Activated naive CD4-positive, alpha-beta T cell treated with anti-CD3 and anti-CD28 coated beads for 36 hours (primary cell): ENCODE measurements at regions of chr10 and their contacts with region 1.

Region 1: DNA sequence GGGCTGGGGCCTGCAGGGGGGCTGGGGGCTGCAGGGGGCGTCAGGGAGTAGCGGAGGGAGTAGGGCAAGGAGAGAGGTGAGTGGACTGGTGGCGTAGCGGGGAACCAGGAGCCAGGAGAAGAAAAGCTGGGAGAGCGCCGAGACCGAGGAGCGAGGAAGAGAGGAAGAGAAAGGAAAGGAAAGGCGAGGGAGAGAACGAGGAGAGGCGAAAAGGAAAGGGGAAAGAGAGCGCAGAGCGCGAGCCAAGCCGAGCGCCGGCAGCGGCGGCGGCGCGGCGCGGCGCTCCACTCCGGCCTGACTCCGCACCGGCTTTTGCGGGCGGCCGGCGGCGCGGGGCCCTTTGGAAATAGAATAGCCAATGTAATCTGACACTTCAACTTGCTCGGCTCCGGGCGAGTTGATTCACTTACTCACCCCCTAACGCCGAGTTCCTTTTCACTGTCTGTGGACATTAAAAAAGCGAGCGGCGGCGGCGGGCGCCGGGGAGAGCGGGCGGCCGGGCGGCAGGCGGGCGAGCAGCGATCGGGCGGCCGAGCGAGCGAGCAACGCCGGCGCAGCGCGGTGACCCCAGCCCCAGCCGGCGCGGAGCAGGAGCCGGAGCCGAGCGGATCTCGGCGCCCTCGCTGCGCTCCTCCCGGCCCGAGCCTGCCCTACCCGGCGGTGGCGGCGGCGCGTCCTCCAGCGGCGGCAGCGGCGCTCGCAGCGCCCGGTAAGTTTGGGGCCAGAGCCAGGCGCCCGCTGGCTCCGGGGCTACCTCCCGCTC is at the start of gene ZMIZ1:
- DNase-seq: peak; percentile 85
- H3K4me3 Mint-ChIP-seq: peak within 1 kb of the TSS; percentile 89
- H3K27ac Mint-ChIP-seq: no peak within 1 kb of the TSS
- H3K4me1 Mint-ChIP-seq: peaks cover 27% of the 10 kb centered on the region
- H3K27me3 Mint-ChIP-seq: peaks cover 5% of the 10 kb centered on the region
- total RNA-seq, gene ZMIZ1: 15.6 to 18.3 TPM

Region 2: DNA sequence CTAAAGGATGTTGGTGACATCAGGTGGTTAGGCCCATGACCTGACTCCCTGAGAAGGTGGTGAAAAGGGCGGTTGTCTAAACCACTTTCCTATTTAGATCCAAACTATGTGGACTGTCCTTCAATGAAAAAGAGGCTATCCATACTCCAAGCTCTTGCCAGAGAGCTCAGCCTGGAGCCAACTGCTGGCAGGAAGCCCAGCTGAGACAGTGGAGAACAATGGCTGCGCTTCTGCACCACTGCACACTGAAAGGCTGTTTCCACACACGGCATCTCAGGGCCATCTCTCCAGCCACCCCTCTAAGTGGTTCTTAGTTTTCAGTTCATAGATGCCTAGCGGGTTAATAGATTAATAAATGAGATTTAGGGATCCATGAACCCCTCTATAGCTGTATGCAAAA is 488.7 kb before region 1 on chr10:
- CTCF ChIA-PET with region 1: no interaction called
- intact Hi-C with region 1: loop called (anchors 5 kb)
- DNase-seq: no peak
- H3K4me3 Mint-ChIP-seq: no peak overlapping the region
- H3K27ac Mint-ChIP-seq: no peak overlapping the region
- H3K4me1 Mint-ChIP-seq: peaks cover 15% of the 10 kb centered on the region
- H3K27me3 Mint-ChIP-seq: no peaks in the 10 kb centered on the region

Region 3: DNA sequence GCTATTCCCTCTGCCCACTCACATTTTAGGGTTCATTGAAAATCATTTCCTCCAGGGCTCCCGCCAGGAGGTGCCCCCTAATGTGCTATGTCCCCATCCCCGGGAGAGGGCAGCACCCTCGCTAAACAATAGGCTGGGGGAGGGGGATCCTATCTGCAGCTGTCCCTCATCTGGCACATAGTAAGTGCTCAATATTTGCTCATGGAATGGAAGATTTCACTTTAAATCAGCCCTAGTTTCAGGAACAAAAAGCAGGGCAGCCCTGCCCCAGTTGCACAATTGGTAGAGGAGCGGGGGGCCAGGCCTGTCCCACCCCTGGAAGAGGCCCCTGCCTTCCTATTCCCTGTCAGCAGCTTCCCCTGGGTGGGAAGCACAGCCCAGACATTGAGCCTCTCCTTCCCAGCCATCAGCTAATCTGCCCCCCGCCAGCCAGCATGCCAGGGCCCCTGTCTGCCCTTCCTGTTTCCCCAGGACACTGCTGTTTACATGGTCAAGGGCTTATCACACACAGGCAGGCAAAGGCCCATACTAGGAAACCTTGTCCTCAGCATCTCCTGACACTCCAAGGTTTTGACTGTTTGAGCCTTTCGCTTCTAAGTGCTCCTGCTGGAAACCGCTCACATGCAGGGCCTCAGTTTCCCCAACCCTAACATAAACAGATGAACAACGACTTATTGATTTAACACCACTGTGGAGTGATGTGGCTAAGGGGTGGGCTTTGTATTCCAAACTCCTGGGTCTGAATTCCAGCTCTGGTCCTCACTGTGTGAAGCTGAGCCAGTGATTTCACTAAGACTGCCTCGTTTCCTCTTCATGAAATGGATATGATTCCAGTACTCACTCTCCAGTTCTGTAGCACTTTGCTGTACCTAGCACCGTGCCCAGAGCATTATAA is 130.7 kb before region 1 on chr10:
- CTCF ChIA-PET with region 1: no interaction called
- intact Hi-C with region 1: loop called (anchors 2 kb)
- DNase-seq: peak; percentile 39
- H3K4me3 Mint-ChIP-seq: no peak overlapping the region
- H3K27ac Mint-ChIP-seq: no peak overlapping the region
- H3K4me1 Mint-ChIP-seq: no peaks in the 10 kb centered on the region
- H3K27me3 Mint-ChIP-seq: no peaks in the 10 kb centered on the region

Region 4: DNA sequence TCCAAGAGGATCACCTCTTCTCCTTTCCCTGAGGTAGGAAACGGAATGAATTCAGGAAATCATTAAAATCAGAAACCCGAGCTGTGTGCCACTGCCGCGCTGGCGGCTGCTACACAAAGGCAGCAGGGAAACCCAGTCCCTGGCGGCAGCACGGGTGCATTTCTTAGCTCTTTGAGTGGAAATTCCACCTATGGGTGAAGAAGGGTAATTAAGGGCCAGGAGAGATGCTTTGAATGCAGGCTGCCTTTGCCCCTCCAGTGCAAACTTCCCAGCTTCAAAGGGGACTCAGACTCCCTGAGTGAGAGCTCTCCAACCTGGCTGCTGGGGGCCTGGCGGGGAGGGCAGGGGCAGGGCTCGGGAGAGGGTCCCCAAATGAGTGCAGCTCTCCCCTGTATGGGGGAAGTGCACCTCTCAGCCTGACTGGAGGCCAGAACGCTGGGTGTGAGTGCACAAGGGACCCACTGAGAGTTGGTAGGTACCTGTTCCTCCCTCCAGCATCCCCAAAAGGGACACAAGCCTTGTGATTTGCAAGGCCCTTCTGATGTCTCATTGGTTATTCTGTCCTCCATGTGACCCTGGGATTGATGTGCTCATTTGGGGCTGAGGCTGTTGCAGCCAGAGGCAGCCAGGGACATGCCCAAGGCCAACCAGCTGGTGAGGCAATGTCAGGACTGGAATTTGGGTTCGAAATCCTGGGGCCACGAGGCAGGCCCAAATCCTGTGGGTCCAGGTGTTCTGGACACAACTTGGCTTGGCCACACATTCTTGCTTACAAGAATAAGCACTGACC is 16.3 kb before region 1 on chr10:
- CTCF ChIA-PET with region 1: no interaction called
- intact Hi-C with region 1: loop called (anchors 1 kb)
- DNase-seq: peak; percentile 35
- H3K4me3 Mint-ChIP-seq: no peak overlapping the region
- H3K27ac Mint-ChIP-seq: no peak overlapping the region
- H3K4me1 Mint-ChIP-seq: peaks cover 35% of the 10 kb centered on the region
- H3K27me3 Mint-ChIP-seq: no peaks in the 10 kb centered on the region

Region 5: DNA sequence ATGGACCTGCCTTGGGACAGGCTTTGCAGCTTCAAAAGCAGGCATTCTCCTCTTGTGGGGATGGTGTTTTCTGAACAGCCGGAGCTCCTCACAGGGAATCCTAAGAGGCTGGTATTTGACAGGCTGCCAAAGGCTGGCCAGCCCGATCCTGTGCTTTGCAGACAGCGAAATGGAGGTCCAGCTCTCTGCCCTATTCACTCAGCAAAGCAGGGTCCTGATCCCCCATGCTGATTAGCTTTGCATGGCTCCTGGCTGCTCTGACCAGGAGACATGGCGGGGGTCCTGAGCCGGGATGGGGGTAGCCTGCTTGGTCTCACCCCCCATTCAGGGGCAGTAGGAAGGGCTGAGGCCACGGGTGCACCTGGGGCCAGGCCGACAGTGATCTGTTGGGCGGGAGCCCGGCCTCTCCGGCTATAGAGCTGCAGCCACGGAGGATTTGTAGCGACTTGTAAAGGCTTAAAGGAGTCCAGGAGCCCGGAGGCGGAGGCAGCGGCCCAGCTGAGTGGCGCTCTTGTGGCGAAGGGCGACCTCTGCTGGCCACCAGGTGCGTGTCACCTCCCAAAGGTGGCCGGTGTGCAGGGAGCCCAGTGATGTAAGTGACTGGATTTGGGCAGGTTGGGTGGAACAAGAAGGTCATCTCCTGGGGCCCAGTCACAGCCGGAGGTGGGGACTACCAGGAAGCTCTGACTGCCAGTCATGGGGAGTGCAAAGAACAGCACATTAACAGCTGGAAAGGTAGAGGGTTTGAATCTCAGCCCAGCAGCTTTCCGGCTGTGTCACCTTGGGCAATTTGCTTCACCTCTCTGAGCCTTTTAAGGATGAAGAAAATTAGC is 126.6 kb after region 1 on chr10:
- CTCF ChIA-PET with region 1: interaction called, 9 read pairs
- intact Hi-C with region 1: loop called (anchors 1 kb)
- DNase-seq: peak; percentile 84
- H3K4me3 Mint-ChIP-seq: no peak overlapping the region
- H3K27ac Mint-ChIP-seq: no peak overlapping the region
- H3K4me1 Mint-ChIP-seq: peaks cover 5% of the 10 kb centered on the region
- H3K27me3 Mint-ChIP-seq: no peaks in the 10 kb centered on the region

Region 6: GRCh38 chr10:79260786-79261740 is 192.3 kb after region 1 on chr10:
- CTCF ChIA-PET with region 1: no interaction called
- intact Hi-C with region 1: no loop called
- DNase-seq: no peak
- H3K4me3 Mint-ChIP-seq: no peak overlapping the region
- H3K27ac Mint-ChIP-seq: no peak overlapping the region
- H3K4me1 Mint-ChIP-seq: peaks cover 4% of the 10 kb centered on the region
- H3K27me3 Mint-ChIP-seq: no peaks in the 10 kb centered on the region